ENCODE measurements at regions of chr4 and their contacts with region 1.

Region 1: GRCh38 chr4:139734875-139735380 is 69.3 kb downstream of the MGST2 start:
- DNase-seq: peak; percentile 92 to 93 (median 93)
- ATAC-seq: peak; percentile 93 to 96 (median 96)
- H3K4me3 ChIP-seq: peak overlapping the region; percentile 3 to 70 (median 54)
- H3K27ac ChIP-seq: peak overlapping the region; percentile 53 to 93 (median 82)
- H3K4me1 ChIP-seq: peaks cover 0 to 57% (median 34%) of the 10 kb centered on the region in 12 donors
- H3K27me3 ChIP-seq: no peaks in the 10 kb centered on the region
- CTCF ChIP-seq: peak; percentile 73 to 97 (median 92)
- POLR2A ChIP-seq: peak in 1 of 2 donors; percentile 27

Region 2: GRCh38 chr4:139692309-139693012 is 42.5 kb before region 1 on chr4:
- intact Hi-C with region 1: no loop called
- DNase-seq: peak in 4 of 5 donors; percentile 25 to 45 (median 34)
- ATAC-seq: peak; percentile 57 to 89 (median 85)
- H3K4me3 ChIP-seq: no peak overlapping the region
- H3K27ac ChIP-seq: peak overlapping the region in 7 of 12 donors; percentile 9 to 66 (median 28)
- H3K4me1 ChIP-seq: peaks cover 0 to 34% (median 15%) of the 10 kb centered on the region in 12 donors
- H3K27me3 ChIP-seq: no peaks in the 10 kb centered on the region
- CTCF ChIP-seq: peak in 9 of 12 donors; percentile 22 to 50 (median 35)
- POLR2A ChIP-seq: no peak

Region 3: GRCh38 chr4:139761461-139761860 is 26.5 kb after region 1 on chr4:
- intact Hi-C with region 1: loop called in 4 of 10 experiments (anchors 2 kb)
- DNase-seq: no peak
- ATAC-seq: peak in 3 of 4 donors; percentile 7 to 14 (median 13)
- H3K4me3 ChIP-seq: no peak overlapping the region
- H3K27ac ChIP-seq: peak overlapping the region in 10 of 12 donors; percentile 12 to 96 (median 90)
- H3K4me1 ChIP-seq: peaks cover 13 to 64% (median 47%) of the 10 kb centered on the region in 12 donors
- H3K27me3 ChIP-seq: no peaks in the 10 kb centered on the region
- CTCF ChIP-seq: peak in 9 of 12 donors; percentile 9 to 53 (median 33)
- POLR2A ChIP-seq: no peak

Region 4: DNA sequence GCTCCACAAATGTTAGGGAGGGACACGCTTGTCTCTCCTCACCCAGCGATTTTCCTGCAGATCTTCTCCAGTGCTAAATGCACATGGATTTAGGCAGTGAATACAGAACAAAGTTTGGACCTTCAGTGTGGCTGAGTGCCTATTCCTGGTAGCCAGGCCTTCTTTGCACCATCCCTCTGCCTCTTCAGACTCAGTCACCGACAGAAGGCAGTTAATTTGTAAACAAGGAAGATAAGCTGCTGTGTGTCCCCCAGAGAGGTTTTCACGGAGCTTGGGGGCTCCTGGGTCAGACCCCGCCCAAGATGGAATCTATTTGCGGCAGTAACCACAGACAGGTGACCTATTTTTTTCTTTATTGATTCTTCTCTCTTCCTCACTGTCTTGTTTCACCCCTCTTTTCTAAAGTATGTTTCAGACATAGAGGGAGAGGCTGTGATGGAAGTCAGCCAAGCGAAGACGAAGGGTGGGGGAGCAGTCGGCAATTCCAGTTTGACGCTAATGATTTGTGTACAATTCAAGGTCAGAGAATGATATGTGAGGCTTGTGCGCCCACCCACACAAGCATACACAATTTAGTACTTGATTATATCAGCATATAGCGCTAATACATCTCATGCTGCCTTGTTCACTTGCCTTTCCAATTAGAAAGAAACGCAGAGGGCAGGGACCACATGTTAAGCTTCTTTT is 131.5 kb after region 1 on chr4:
- intact Hi-C with region 1: loop called in 2 of 10 experiments (anchors 5 kb)
- DNase-seq: no peak
- ATAC-seq: no peak
- H3K4me3 ChIP-seq: no peak overlapping the region
- H3K27ac ChIP-seq: no peak overlapping the region
- H3K4me1 ChIP-seq: peaks cover 0 to under 1% (median 0%) of the 10 kb centered on the region in 12 donors
- H3K27me3 ChIP-seq: no peaks in the 10 kb centered on the region
- CTCF ChIP-seq: no peak
- POLR2A ChIP-seq: no peak

Region 5: GRCh38 chr4:140004549-140004895 is 269.6 kb after region 1 on chr4:
- intact Hi-C with region 1: loop called in 4 of 10 experiments (anchors 5 to 10 kb)
- DNase-seq: peak; percentile 57 to 72 (median 63)
- ATAC-seq: peak; percentile 88 to 96 (median 92)
- H3K4me3 ChIP-seq: peak overlapping the region; percentile 9 to 56 (median 46)
- H3K27ac ChIP-seq: peak overlapping the region in 8 of 12 donors; percentile 12 to 67 (median 49)
- H3K4me1 ChIP-seq: peaks cover 0 to 28% (median 6%) of the 10 kb centered on the region in 12 donors
- H3K27me3 ChIP-seq: no peaks in the 10 kb centered on the region
- CTCF ChIP-seq: no peak
- POLR2A ChIP-seq: no peak

Region 6: DNA sequence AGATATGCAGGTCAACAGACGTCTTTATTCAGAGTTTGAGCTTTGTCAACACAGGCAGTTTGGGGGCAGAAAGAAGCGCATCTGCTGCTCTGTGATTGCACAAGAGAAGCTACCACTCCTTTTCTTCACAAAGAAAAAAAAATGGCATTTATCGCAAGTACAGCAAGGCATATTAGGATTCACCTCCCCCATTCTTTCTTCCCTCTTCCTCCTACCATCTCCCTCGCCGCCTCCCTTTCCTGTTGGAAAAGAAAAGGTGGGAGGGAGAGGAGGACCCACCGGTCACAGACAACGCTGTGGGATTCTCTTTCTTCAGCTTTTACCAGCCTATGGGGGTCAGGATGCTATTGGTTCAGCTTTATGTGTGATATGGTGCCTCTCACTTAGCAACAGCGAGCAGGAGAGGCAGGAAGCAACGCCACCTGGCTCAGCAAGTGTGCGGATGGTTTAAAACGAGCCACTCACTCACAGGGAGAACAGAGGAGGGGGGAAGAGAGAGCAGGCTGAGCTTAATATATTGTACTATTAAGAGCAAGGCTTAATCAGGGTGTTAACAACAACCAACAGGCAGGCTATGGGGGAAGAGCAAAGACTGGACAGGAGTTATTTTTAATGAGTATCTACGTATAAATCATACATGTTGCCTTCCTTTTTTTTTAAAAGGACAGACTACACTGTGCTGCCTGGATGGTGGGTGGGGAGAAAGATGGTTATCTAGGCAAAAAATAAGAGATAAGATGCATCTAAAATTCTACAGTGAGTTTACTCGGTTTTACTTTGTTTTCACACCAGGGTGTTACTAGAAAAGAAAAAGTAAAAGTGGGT is 314.3 kb after region 1 on chr4:
- intact Hi-C with region 1: loop called in 8 of 10 experiments (anchors 2 to 10 kb)
- DNase-seq: peak in 4 of 5 donors; percentile 54 to 63 (median 58)
- ATAC-seq: peak; percentile 55 to 88 (median 83)
- H3K4me3 ChIP-seq: peak overlapping the region; percentile 2 to 59 (median 42)
- H3K27ac ChIP-seq: peak overlapping the region in 11 of 12 donors; percentile 28 to 79 (median 53)
- H3K4me1 ChIP-seq: peaks cover 0 to 60% (median 28%) of the 10 kb centered on the region in 12 donors
- H3K27me3 ChIP-seq: no peaks in the 10 kb centered on the region
- CTCF ChIP-seq: peak in 5 of 12 donors; percentile 27 to 55 (median 39)
- POLR2A ChIP-seq: no peak

Region 7: GRCh38 chr4:140326395-140326993 is 591.6 kb after region 1 on chr4:
- intact Hi-C with region 1: loop called in 9 of 10 experiments (anchors 2 to 10 kb)
- DNase-seq: peak in 1 of 5 donors; percentile 22
- ATAC-seq: peak in 3 of 4 donors; percentile 63 to 75 (median 71)
- H3K4me3 ChIP-seq: no peak overlapping the region
- H3K27ac ChIP-seq: no peak overlapping the region
- H3K4me1 ChIP-seq: peaks cover 0 to 7% (median 0%) of the 10 kb centered on the region in 12 donors
- H3K27me3 ChIP-seq: no peaks in the 10 kb centered on the region
- CTCF ChIP-seq: peak; percentile 42 to 79 (median 70)
- POLR2A ChIP-seq: no peak

Measured in heart left ventricle (tissue), 16 donors.